ENCODE measurements at regions of chr11 and their contacts with region 1.

Region 1: DNA sequence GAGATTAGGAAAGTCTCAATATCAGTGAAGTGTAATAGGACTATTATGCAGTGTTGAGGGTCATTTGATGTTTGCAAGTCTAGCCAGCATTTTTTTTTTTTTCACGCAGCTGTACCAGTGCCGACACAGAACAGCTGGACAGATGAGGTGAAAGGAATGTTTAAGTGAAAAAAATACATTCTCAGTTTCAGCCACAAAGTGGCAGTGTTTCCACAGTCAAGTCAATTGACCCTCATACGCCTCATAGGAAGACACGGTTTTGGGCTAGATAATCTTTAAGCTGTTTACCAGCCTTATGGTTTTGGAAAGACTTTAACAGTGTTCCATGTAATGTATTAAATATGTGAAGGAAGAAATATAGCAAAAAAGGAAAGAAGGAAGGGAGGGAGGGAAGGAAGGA is 349.9 kb upstream of the ANO3 start:
- DNase-seq: peak in 1 of 2 experiments; percentile 4
- H3K4me3 ChIP-seq: no peak overlapping the region
- H3K27ac ChIP-seq: no peak overlapping the region
- H3K4me1 ChIP-seq: no peaks in the 10 kb centered on the region
- H3K27me3 ChIP-seq: no peaks in the 10 kb centered on the region
- CTCF ChIP-seq: peak; percentile 73

Region 2: DNA sequence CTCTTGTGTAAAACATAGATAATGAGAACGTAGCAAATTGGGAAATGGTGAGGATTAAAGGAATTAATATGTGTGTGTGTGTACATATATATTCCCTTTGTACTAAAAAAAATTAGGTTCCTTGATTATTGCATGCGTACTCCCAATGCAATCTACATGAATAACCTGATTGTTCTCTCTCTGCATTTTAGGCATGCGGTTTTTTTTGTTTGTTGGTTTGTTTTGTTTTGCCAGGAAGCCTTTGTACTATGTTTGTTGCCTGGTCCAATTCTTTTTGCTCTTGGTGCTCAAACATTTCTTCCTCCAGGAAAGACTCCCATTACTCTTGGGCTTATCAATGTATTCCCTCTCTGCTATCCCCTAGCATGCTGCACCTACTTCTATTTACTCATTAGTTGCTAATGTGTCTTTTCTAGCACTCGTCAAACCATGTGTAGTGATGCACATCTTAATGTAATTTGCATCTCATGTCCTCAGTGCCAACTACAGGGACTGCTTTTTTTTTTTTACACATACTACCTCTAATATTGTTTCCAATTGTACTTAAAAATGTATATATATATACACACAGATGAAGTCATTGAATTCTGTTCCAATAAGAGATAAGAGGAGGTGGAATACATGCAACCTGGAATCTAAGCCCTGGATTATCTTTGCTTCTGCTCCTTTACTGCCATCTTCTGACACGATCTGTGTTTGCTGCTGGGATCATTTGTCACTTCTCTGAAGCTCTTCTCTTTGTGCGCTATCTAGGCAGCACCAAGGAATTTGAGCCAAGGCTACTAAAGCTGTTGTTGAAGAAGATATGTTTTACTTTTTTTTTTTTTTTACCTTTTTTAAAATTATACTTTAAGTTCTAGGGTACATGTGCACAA is 152.7 kb after region 1 on chr11:
- CTCF ChIA-PET with region 1: interaction called, 6 read pairs
- POLR2A ChIA-PET with region 1: no interaction called
- intact Hi-C with region 1: loop called (anchors 10 kb)
- DNase-seq: no peak
- H3K4me3 ChIP-seq: no peak overlapping the region
- H3K27ac ChIP-seq: no peak overlapping the region
- H3K4me1 ChIP-seq: no peaks in the 10 kb centered on the region
- H3K27me3 ChIP-seq: no peaks in the 10 kb centered on the region
- CTCF ChIP-seq: peak; percentile 26; the same call in 1 of the 2 replicates

Region 3: DNA sequence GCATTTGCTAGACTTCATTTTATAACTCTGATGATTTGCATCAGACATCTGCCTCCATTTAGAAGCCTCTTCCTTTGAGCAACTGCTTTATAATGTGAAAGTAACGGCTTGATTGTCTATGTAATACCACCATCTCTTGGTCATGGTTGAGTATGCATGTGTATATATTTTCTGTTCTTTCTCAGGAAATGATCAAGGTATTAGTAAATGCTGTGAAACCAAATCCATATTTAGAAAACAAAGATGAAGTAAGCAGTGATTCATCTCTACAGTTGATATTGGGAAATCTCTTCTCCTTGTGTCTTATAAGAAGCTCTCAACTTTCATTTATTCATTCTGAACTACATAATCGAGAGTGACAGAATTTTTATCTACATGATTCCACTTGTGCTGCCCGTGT is 245.3 kb after region 1 on chr11:
- CTCF ChIA-PET with region 1: interaction called, 8 read pairs
- POLR2A ChIA-PET with region 1: no interaction called
- intact Hi-C with region 1: loop called (anchors 1 kb)
- DNase-seq: peak in 1 of 2 experiments; percentile 49
- H3K4me3 ChIP-seq: no peak overlapping the region
- H3K27ac ChIP-seq: no peak overlapping the region
- H3K4me1 ChIP-seq: no peaks in the 10 kb centered on the region
- H3K27me3 ChIP-seq: no peaks in the 10 kb centered on the region
- CTCF ChIP-seq: peak; percentile 61

Region 4: DNA sequence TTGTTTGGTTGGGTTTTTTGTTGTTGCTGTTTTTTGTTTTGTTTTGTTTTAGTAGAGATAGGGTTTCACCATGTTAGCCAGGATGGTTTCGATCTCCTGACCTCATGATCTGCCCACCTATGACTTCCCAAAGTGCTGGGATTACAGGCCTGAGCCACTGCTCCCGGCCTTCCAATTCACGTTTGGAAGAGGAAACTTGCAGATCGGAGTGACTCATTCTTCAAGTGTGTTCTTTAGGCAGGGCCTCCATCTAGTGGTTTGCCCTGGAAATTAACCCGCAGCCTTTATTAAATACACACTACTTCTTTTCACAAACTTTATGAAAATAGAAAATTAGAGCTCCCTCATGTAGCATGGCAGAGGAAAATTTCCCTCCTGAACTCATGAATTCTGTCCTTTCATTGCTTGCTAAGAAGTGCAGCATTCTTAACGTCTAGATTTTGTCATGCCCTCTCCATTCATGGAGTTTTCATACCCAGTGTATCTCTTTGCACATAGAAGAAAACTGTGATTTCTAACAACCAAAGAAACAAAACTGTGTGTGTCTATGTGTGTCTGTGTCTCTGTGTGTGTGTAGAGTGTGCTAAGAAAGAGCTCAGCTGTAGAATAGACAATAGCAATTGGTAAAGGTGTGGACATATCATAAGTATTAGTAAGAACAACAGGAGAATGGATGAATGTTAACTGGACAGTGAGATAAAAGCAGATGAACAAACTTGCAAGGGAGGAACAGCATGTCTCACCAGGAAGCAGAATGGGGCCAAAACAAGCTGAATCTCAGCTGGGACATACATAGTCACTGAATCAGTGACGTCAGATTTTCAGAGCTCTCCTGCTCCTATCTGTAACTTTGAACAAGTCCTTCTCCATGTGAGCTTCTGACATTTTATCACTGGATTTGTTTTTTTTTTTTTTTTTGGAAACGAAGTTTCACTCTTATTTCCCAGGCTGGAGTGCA is 1177.0 kb after region 1 on chr11:
- CTCF ChIA-PET with region 1: no interaction called
- POLR2A ChIA-PET with region 1: no interaction called
- intact Hi-C with region 1: loop called (anchors 2 kb)
- DNase-seq: peak; percentile 40 to 56
- H3K4me3 ChIP-seq: no peak overlapping the region
- H3K27ac ChIP-seq: no peak overlapping the region
- H3K4me1 ChIP-seq: no peaks in the 10 kb centered on the region
- H3K27me3 ChIP-seq: no peaks in the 10 kb centered on the region
- CTCF ChIP-seq: peak; percentile 91